ENCODE measurements at regions of chr10 and their contacts with region 1.

Region 1: DNA sequence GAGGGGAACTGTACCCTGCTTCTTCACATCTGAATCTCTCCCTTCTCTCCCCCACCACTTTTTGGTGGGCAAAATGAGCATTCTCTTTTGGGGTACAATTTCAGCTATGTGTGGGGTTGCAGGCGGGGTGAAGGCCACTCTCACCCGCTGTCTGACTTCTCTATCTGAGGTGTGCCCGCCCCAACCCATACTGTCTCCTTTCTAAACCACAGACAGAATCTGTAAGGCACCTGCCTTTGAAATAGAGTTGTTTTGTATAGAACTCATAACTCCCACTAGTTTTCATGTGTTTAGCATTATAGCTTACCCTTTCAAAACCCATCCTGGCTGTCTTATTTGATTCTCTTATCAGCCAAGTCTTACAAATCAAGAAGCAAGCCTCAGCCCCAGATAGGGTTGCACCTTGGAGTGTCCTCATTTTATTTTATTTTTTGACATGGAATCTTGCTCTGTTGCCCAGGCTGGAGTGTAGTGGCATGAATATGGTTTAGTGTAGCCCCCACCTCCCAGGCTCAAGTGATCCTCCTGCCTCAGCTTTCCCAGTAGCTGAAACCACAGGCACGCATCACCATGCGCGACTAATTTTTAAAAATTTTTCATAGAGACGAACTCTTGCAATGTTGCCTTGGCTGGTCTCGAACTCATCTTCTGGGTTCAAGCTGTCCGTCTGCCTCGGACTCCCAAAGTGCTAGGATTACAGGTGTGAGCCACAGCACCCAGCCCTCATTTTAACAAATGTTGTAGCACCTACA is 11.9 kb downstream of the TSPAN14 start:
- DNase-seq: no peak
- H3K4me3 Mint-ChIP-seq: peak overlapping the region; percentile 78
- H3K27ac Mint-ChIP-seq: peak overlapping the region; percentile 93
- H3K4me1 Mint-ChIP-seq: peaks cover 96% of the 10 kb centered on the region
- H3K27me3 Mint-ChIP-seq: no peaks in the 10 kb centered on the region

Region 2: DNA sequence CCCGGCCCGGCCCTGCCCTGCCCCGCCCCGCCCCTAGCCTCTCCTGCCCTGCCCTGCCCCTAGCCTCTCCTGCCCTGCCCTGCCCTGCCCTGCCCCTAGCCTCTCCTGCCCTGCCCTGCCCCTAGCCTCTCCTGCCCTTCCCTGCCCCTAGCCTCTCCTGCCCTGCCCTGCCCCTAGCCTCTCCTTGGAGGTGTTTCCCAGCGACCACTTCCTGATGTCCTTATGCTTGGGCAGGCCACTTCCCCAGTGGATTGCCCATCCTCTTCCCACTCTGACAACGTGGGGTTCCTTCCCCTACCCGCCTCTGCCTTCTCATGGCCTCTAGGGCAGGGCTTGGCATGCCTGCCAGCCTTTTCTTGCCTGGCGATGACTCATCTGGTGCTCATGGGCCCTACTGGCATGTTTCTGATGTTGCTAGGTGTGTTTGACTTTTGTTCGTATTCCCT is 36.5 kb before region 1 on chr10:
- intact Hi-C with region 1: no loop called
- DNase-seq: no peak
- H3K4me3 Mint-ChIP-seq: no peak overlapping the region
- H3K27ac Mint-ChIP-seq: no peak overlapping the region
- H3K4me1 Mint-ChIP-seq: no peaks in the 10 kb centered on the region
- H3K27me3 Mint-ChIP-seq: no peaks in the 10 kb centered on the region

Region 3: DNA sequence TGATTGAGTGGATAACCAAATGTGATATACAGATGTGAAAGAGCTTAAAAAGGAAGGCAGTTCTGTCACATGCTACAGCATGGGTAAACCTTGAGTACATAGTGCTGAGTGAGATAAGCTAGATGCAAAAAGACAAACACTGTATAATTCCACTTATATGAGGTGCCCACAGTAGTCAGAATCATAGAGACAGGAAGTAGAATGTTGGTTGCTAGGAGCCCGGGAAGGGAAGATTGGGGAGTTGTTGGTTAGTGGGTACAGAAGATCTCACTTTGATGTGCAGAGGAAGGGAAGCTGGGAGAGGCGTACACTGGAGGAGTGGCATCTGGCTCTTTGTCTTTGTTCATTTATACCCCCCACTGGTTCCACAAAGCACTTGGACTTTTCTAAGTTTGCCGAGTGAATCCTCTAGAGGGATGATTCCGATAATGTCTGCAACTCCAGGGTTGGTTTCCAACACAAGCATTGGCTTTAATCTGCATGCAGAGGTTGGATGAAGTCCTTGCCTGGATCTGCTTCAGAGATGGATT is 27.6 kb after region 1 on chr10:
- intact Hi-C with region 1: loop called (anchors 1 kb)
- DNase-seq: no peak
- H3K4me3 Mint-ChIP-seq: peak overlapping the region; percentile 70
- H3K27ac Mint-ChIP-seq: peak overlapping the region; percentile 94
- H3K4me1 Mint-ChIP-seq: peaks cover 94% of the 10 kb centered on the region
- H3K27me3 Mint-ChIP-seq: no peaks in the 10 kb centered on the region

Measured in activated T-helper 1 cell treated with anti-CD3 and anti-CD28 coated beads, Interleukin-12 subunit alpha, Interleukin-12 subunit beta, Interleukin-2, Interleukin-4 antibody, amounts not matched to agents 30 ng/mL and 10 ng/mL and 1 ng/mL, durations not matched to agents 14 hours and 24 hours and 36 hours (primary cell).